Adrenal gland (tissue), 19 donors: ENCODE measurements at regions of chr2 and their contacts with region 1.

Region 1: GRCh38 chr2:211157856-211158463 is 601.6 kb downstream of the CPS1 start:
- DNase-seq: peak; percentile 52 to 92 (median 82)
- H3K4me3 ChIP-seq: no peak overlapping the region
- H3K27ac ChIP-seq: no peak overlapping the region
- H3K4me1 ChIP-seq: no peaks in the 10 kb centered on the region
- H3K27me3 ChIP-seq: no peaks in the 10 kb centered on the region
- CTCF ChIP-seq: peak; percentile 71 to 94 (median 81)
- POLR2A ChIP-seq: no peak

Region 2: GRCh38 chr2:211085056-211085680 is 72.8 kb before region 1 on chr2:
- intact Hi-C with region 1: loop called (anchors 5 to 10 kb)
- DNase-seq: peak in 3 of 7 donors; percentile 9 to 22 (median 21)
- H3K4me3 ChIP-seq: no peak overlapping the region
- H3K27ac ChIP-seq: no peak overlapping the region
- H3K4me1 ChIP-seq: no peaks in the 10 kb centered on the region
- H3K27me3 ChIP-seq: no peaks in the 10 kb centered on the region
- CTCF ChIP-seq: peak; percentile 47 to 74 (median 54)
- POLR2A ChIP-seq: no peak